ENCODE measurements at regions of chr15 and their contacts with region 1.

Region 1: DNA sequence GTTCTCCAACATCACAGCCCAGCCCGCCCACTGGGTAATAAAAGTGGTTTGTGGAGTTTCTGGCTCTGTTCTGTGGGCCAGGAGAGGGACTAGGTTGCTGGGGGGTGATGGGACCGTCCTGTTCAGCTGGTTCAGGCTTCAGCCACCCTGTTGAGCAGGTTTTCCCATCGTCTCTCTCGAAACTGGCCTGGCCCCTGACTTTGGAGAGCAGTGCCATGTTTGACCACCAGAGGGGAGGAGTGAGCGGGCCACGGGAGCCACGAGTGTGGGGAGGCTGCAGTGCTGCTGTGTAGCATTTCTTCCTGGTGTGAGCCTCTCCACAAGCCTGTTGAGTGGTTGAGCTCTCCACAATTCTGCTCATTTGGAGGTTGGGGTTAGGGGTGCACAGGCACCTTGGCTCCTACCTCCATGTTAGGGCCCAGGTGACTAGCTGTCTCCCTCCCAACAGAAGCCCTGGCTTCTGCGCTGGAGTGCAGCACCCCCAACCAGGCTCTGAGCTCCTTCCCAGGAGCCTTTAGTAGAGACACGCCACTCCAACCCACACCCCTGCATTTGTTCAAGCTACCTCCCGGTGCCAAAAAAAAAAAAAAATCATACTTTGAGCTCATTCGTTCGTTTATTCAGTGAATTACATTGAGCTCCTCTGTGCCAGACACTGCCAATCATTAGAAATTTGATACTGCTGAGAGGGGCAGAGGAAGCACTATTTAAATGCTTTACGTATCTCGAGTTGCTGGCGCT is 13.9 kb downstream of the SPINT1 start:
- DNase-seq: peak; percentile 88
- ATAC-seq: peak; percentile 79
- H3K4me3 Mint-ChIP-seq: no peak overlapping the region
- H3K27ac Mint-ChIP-seq: peak overlapping the region; percentile 94
- H3K4me1 Mint-ChIP-seq: peaks cover 22% of the 10 kb centered on the region
- H3K27me3 Mint-ChIP-seq: no peaks in the 10 kb centered on the region
- CTCF ChIP-seq: peak; percentile 93

Region 2: GRCh38 chr15:40618023-40618422 is 239.7 kb before region 1 on chr15:
- CTCF ChIA-PET with region 1: no interaction called
- POLR2A ChIA-PET with region 1: no interaction called
- DNase-seq: no peak
- ATAC-seq: no peak
- H3K4me3 Mint-ChIP-seq: no peak overlapping the region
- H3K27ac Mint-ChIP-seq: no peak overlapping the region
- H3K4me1 Mint-ChIP-seq: no peaks in the 10 kb centered on the region
- H3K27me3 Mint-ChIP-seq: no peaks in the 10 kb centered on the region
- CTCF ChIP-seq: no peak

Region 3: GRCh38 chr15:40694688-40695468 is 162.9 kb before region 1 on chr15 and contains the start of gene RAD51:
- CTCF ChIA-PET with region 1: interaction called, 10 read pairs
- POLR2A ChIA-PET with region 1: no interaction called
- DNase-seq: peak; percentile 93
- ATAC-seq: peak; percentile 92
- H3K4me3 Mint-ChIP-seq: peak within 1 kb of the TSS; percentile 97
- H3K27ac Mint-ChIP-seq: peak within 1 kb of the TSS; percentile 100
- H3K4me1 Mint-ChIP-seq: peaks cover 10% of the 10 kb centered on the region
- H3K27me3 Mint-ChIP-seq: no peaks in the 10 kb centered on the region
- CTCF ChIP-seq: no peak
- total RNA-seq, gene RAD51: 29.7 to 36.4 TPM (median 31.0 TPM) in 3 replicates

Region 4: DNA sequence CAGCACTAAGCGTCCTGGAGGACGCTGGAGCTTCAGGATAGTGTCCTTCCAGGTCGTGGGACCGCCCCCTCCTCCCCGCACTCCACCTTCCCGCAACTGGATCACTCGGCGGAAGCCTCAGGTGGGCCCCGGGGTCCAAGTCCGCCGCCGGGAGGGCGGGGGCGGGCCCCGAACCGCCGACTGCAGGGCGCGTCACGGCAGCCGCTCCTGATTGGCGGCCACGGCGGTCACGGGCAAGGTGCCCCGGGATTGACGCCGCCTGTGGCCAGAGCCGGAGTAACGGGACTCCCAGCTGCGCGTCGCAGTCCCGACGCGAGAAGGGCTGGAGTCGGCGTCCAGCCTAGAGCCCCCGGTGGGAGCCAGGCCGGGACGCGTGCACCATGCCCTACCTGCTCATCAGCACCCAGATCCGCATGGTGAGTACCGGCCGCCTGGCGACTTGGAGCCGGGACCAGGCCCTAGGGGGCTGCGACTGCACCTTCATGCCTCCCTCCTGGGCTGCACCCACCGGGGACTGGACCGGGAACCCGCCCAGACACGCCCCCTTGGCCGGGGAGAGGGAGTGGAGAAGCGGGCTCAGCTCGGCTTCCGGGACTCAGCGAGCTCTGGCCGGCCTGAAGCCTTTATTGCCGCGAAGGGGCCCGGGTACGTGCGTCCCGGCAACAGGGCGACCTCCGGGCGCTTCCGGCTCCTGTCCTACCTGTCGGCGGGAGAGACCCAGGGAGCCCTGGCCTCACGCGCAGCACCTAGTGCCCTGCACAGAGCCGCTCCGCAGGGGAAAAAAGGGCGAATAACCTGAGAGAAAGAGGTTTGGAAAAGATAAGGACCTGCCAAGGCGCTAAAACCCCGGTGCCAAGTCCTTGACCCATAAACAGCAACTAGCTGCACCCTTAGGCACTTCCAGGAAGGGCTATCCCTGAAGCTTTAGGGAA is 93.7 kb before region 1 on chr15 and contains the start of gene GCHFR:
- CTCF ChIA-PET with region 1: interaction called, 60 read pairs
- POLR2A ChIA-PET with region 1: interaction called, 3 read pairs
- DNase-seq: peak; percentile 81
- ATAC-seq: peak; percentile 40
- H3K4me3 Mint-ChIP-seq: peak within 1 kb of the TSS; percentile 81
- H3K27ac Mint-ChIP-seq: peak within 1 kb of the TSS; percentile 94
- H3K4me1 Mint-ChIP-seq: peaks cover 31% of the 10 kb centered on the region
- H3K27me3 Mint-ChIP-seq: peaks cover 14% of the 10 kb centered on the region
- CTCF ChIP-seq: no peak
- total RNA-seq, gene GCHFR: 42.3 to 63.8 TPM (median 62.9 TPM) in 3 replicates

Region 5: GRCh38 chr15:40807028-40807887 is 50.5 kb before region 1 on chr15 and contains the starts of genes DNAJC17 and ZFYVE19:
- CTCF ChIA-PET with region 1: interaction called, 33 read pairs
- POLR2A ChIA-PET with region 1: interaction called, 3 read pairs
- DNase-seq: peak; percentile 97
- ATAC-seq: peak; percentile 99
- H3K4me3 Mint-ChIP-seq: peak within 1 kb of the TSS; percentile 98
- H3K27ac Mint-ChIP-seq: peak within 1 kb of the TSS; percentile 97
- H3K4me1 Mint-ChIP-seq: peaks cover 22% of the 10 kb centered on the region
- H3K27me3 Mint-ChIP-seq: no peaks in the 10 kb centered on the region
- CTCF ChIP-seq: no peak
- total RNA-seq, gene DNAJC17: 49.8 to 53.0 TPM (median 50.2 TPM) in 3 replicates
- total RNA-seq, gene ZFYVE19: 17.3 to 18.9 TPM (median 17.6 TPM) in 3 replicates

Region 6: DNA sequence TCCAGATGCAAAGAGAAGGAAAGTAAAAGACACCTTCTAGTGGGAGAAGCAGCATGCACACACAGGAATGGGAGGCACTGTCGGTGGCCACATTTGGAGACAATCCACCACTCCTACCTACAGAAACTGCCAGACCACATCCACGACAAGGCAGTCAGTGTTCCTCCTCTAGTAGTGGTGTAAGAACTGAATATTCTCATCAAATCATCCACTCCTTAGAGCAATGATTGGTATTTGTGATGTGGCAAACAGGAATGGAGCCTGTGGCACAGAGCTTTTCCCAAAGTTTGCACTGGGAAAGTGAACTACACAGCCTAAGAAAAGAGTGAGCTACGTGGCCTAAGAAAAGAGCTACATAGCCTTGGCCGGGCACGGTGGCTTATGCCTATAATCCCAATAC is 19.0 kb before region 1 on chr15:
- CTCF ChIA-PET with region 1: interaction called, 177 read pairs
- POLR2A ChIA-PET with region 1: interaction called, 13 read pairs
- DNase-seq: no peak
- ATAC-seq: no peak
- H3K4me3 Mint-ChIP-seq: no peak overlapping the region
- H3K27ac Mint-ChIP-seq: 0 out of 2 replicates have a peak overlapping the region, but pooled peaks have one; percentile 28
- H3K4me1 Mint-ChIP-seq: peaks cover 7% of the 10 kb centered on the region
- H3K27me3 Mint-ChIP-seq: no peaks in the 10 kb centered on the region; the same call in 1 of the 2 replicates
- CTCF ChIP-seq: no peak

Region 7: GRCh38 chr15:40873625-40874561 is 16.1 kb after region 1 on chr15 and contains the start of gene RHOV:
- CTCF ChIA-PET with region 1: no interaction called
- POLR2A ChIA-PET with region 1: interaction called, 39 read pairs
- DNase-seq: peak; percentile 89
- ATAC-seq: peak; percentile 80
- H3K4me3 Mint-ChIP-seq: peak within 1 kb of the TSS; percentile 79
- H3K27ac Mint-ChIP-seq: no peak within 1 kb of the TSS; the same call in none of the 2 replicates
- H3K4me1 Mint-ChIP-seq: peaks cover 36% of the 10 kb centered on the region
- H3K27me3 Mint-ChIP-seq: peaks cover 4% of the 10 kb centered on the region; the same call in 1 of the 2 replicates
- CTCF ChIP-seq: no peak
- total RNA-seq, gene RHOV: 5.0 to 5.4 TPM (median 5.1 TPM) in 3 replicates

Region 8: DNA sequence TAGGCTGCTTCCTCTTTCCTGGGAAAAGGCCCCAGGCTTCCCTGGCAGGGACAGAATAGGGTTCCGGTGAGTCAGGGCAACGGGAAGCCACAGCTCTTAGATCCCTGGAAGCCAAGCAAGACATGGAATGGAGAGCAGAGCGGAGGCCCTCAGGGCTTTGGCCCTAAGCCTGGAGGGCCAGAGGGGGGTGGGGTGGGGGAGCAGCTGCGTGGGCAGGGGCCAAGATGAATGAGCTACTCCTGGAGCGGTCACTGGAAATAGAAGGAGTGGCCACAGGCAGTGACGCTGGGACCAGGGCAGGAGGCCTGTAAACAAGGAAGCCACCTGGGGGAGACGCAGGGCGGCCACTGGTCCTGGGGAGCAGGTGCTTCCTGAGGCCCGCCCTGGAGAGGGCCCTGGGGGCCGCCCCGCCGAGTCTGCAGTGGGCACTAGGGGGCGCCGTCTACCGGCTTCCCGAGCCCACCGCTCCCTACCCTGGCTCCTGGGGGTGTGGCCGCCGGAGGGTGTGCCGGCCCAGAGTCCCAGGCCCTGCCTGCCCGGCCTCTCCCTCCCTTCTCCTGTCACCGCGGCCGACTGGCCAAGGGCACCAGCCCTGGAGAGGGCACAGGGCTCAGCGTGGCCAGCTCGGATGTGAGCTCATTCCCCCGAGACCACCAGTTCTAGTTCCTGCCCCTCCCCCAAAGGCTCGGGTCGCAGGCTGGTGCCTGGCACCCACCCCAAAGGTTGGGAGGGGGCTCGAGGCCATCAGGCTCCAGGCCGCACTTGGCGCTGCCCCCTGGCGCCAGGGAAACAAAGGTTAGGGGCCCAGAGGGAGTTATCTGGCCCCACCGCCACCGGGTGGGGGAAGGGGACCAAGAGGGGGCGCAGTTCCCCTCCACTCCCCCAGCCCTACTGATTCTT is 48.6 kb after region 1 on chr15:
- CTCF ChIA-PET with region 1: interaction called, 57 read pairs
- POLR2A ChIA-PET with region 1: no interaction called
- DNase-seq: peak; percentile 95
- ATAC-seq: peak; percentile 82
- H3K4me3 Mint-ChIP-seq: peak overlapping the region; percentile 62
- H3K27ac Mint-ChIP-seq: no peak overlapping the region
- H3K4me1 Mint-ChIP-seq: peaks cover 14% of the 10 kb centered on the region
- H3K27me3 Mint-ChIP-seq: no peaks in the 10 kb centered on the region
- CTCF ChIP-seq: peak; percentile 83

Region 9: DNA sequence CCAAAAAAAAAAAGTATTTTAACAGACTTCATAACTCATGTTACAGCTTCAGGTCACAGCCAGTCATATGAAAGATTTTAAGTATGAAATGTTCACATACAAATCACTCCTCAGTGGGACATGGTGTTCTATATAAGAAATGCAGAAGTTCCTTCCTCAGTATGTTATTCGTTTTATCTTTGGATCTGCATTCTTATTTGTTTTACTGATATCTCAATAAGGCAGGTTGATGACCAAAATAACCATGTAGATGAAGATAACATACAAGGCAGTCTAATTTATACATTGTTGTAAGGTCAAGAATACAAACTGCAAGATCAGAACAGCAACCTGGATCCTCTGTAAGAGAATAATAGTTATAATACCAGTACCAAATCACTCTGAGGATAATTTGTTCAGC is 171.1 kb after region 1 on chr15:
- CTCF ChIA-PET with region 1: no interaction called
- POLR2A ChIA-PET with region 1: no interaction called
- DNase-seq: no peak
- ATAC-seq: no peak
- H3K4me3 Mint-ChIP-seq: no peak overlapping the region
- H3K27ac Mint-ChIP-seq: no peak overlapping the region
- H3K4me1 Mint-ChIP-seq: peaks cover 3% of the 10 kb centered on the region; the same call in 1 of the 2 replicates
- H3K27me3 Mint-ChIP-seq: no peaks in the 10 kb centered on the region
- CTCF ChIP-seq: no peak